ENCODE measurements at regions of chr17 and their contacts with region 1.

Region 1: DNA sequence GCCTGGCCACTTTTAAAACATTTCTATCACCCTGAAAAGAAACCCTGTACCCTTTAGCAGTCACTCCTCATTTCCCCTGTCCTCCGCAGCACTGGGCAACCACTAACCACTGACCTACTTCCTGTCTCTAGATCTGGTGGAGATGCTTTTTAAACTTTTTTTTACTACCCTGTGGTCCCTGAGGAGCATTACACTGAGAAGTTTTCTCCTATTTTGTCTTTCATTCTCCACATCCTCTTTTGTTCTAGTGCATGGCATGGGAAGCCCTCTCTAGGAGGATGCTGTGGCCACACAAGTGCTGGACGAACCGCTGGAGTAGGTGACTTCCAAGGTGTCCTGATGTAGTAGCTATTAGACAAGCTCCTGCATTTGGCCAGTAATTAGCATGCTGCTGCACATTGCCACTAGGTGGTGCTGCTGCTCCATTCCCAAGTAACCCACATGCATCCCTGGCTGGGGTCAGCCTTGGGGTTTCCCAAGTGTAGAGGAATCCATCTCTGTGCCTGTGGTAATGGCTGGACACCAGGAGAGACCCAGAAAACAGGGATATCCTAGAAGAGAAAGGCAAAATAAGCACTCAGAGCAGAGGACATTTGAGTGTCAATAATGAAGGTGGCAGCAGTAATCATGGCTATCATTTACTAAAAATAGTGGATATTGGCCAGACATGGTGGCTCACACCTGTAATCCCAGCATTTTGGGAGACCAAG is 143.8 kb upstream of the CRHR1 start:
- DNase-seq: peak; percentile 79

Region 2: GRCh38 chr17:45828628-45829027 is 188.3 kb after region 1 on chr17:
- CTCF ChIA-PET with region 1: interaction called, 13 read pairs
- POLR2A ChIA-PET with region 1: interaction called, 3 read pairs
- DNase-seq: no peak